IMR-90 (cell line): ENCODE measurements at regions of chr9 and their contacts with region 1.

Region 1: DNA sequence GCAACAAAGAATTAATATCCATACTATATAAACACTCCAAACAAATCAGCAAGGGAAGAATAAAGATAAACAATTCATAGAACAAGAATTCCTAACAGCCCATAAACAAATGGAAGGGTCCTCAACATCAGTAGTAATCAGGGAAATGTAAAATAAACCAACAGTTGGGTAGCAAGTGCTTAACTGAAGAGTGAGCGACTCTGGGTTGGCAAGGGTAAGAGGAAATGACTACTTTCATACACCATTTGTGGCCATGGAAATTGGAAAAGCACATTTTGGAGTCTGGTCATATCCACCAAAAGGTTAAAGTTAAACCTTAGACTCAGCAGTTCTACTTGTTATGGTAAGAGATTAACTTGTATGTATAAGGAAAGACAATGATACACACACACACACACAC is 17.4 kb upstream of the RORB start:
- DNase-seq: no peak
- ATAC-seq: no peak
- H3K4me3 ChIP-seq: no peak overlapping the region
- H3K27ac ChIP-seq: no peak overlapping the region
- H3K4me1 ChIP-seq: no peaks in the 10 kb centered on the region
- H3K27me3 ChIP-seq: no peaks in the 10 kb centered on the region
- CTCF ChIP-seq: no peak
- POLR2A ChIP-seq: no peak
- RAD21 ChIP-seq: no peak

Region 2: DNA sequence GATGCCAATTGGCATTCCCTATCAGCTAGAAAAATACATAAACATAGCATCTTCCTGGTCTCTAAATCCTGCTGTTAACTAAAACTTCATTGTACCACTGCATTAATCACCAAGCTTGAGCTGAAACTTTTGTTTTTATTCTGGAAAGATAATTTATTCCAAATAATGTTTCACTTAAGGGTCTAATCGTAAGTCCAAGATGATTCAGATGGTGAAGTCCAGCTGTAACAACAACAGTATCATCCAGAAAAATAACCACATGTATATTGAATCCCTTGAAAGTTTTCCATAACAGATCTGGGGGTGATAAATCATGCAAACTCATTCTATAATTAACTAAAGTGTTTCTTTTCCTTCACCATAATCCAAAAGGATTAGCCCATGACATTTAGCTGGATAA is 41.3 kb after region 1 on chr9:
- CTCF ChIA-PET with region 1: no interaction called
- POLR2A ChIA-PET with region 1: no interaction called
- dilution Hi-C with region 1: no loop called
- in situ Hi-C with region 1: no loop called
- intact Hi-C with region 1: loop called (anchors 5 kb)
- DNase-seq: no peak
- ATAC-seq: no peak
- H3K4me3 ChIP-seq: no peak overlapping the region
- H3K27ac ChIP-seq: no peak overlapping the region
- H3K4me1 ChIP-seq: no peaks in the 10 kb centered on the region
- H3K27me3 ChIP-seq: no peaks in the 10 kb centered on the region
- CTCF ChIP-seq: no peak
- POLR2A ChIP-seq: no peak
- RAD21 ChIP-seq: no peak

Region 3: GRCh38 chr9:75552941-75553340 is 1073.2 kb after region 1 on chr9:
- CTCF ChIA-PET with region 1: no interaction called
- POLR2A ChIA-PET with region 1: no interaction called
- dilution Hi-C with region 1: no loop called
- in situ Hi-C with region 1: no loop called
- intact Hi-C with region 1: no loop called
- DNase-seq: no peak
- ATAC-seq: no peak
- H3K4me3 ChIP-seq: no peak overlapping the region
- H3K27ac ChIP-seq: no peak overlapping the region
- H3K4me1 ChIP-seq: no peaks in the 10 kb centered on the region
- H3K27me3 ChIP-seq: no peaks in the 10 kb centered on the region
- CTCF ChIP-seq: no peak
- POLR2A ChIP-seq: no peak
- RAD21 ChIP-seq: no peak